ENCODE measurements at regions of chr2 and their contacts with region 1.

Region 1: GRCh38 chr2:177489719-177490301 is 97.2 kb downstream of the AGPS start:
- DNase-seq: peak in 1 of 2 donors; percentile 75
- H3K4me3 ChIP-seq: no peak overlapping the region
- H3K27ac ChIP-seq: no peak overlapping the region
- H3K4me1 ChIP-seq: no peaks in the 10 kb centered on the region
- H3K27me3 ChIP-seq: no peaks in the 10 kb centered on the region
- CTCF ChIP-seq: peak in 4 of 7 experiments; percentile 21 to 51 (median 46)
- EP300 ChIP-seq: no peak
- POLR2A ChIP-seq: no peak

Region 2: DNA sequence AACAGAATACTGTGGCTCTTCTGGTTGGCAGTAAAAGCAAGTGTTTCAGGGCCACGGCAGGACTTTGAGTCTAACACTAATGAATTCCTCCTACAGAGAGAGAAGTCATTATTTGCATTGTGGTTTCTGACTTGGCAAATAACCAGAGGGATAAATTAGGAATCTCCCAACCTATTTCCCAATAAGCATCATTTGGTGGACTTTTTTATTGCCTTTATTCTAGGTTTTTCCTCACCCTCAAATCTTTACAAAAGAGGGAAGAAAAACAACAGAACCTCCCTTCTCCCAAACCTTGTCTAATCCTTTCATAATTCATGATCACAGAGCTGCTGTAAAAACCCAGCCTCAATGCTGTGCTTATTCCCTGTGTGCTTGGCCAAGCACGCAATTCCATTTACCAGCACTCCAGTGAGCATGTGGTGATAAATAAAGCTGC is 82.4 kb after region 1 on chr2:
- intact Hi-C with region 1: no loop called
- DNase-seq: peak in 1 of 2 donors; percentile 32
- H3K4me3 ChIP-seq: no peak overlapping the region
- H3K27ac ChIP-seq: no peak overlapping the region
- H3K4me1 ChIP-seq: peaks cover 0 to 13% (median 6%) of the 10 kb centered on the region in 4 donors
- H3K27me3 ChIP-seq: no peaks in the 10 kb centered on the region
- CTCF ChIP-seq: no peak
- EP300 ChIP-seq: no peak
- POLR2A ChIP-seq: no peak

Region 3: DNA sequence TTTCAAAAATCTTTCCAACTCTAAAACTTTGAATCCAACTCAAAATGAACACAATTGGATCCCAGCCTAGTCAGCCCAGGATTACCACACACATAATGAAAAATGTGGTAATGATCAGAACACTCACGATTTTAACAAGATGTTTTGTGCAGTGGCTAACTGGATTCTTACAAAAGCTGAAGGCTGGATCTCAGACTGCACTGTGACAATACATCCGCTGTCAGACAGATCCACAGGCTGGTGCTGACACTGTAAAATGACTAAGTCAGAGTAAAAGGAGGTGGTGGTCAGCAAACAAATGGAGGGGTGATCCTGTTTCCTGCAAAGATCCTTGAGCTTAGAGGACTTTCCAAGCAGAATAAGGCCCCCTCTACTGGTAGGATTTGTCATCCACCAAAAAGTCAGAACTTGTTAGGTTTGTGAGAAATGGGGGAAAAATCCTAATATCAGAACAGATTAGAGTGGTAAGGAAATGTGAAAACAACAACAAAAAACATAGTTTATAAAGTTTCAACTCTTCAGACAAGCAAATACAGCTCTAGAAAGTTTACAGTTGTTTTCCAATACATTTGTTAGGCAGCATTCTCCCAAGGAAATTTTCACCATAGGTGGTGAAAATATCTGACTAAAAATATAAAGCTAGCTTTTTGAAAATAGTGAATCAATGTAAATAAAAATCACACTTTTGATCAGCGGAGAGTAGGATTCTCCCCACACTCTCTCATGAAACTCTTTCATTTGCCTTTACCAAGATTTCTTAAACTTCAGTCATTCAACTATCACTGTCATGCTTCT is 114.7 kb after region 1 on chr2:
- intact Hi-C with region 1: loop called (anchors 10 kb)
- DNase-seq: peak in 1 of 2 donors; percentile 84
- H3K4me3 ChIP-seq: no peak overlapping the region
- H3K27ac ChIP-seq: peak overlapping the region in 1 of 5 donors; percentile 5
- H3K4me1 ChIP-seq: peaks cover 0 to 7% (median 0%) of the 10 kb centered on the region in 4 donors
- H3K27me3 ChIP-seq: no peaks in the 10 kb centered on the region
- CTCF ChIP-seq: peak in 5 of 7 experiments; percentile 32 to 51 (median 49)
- EP300 ChIP-seq: no peak
- POLR2A ChIP-seq: no peak

Region 4: DNA sequence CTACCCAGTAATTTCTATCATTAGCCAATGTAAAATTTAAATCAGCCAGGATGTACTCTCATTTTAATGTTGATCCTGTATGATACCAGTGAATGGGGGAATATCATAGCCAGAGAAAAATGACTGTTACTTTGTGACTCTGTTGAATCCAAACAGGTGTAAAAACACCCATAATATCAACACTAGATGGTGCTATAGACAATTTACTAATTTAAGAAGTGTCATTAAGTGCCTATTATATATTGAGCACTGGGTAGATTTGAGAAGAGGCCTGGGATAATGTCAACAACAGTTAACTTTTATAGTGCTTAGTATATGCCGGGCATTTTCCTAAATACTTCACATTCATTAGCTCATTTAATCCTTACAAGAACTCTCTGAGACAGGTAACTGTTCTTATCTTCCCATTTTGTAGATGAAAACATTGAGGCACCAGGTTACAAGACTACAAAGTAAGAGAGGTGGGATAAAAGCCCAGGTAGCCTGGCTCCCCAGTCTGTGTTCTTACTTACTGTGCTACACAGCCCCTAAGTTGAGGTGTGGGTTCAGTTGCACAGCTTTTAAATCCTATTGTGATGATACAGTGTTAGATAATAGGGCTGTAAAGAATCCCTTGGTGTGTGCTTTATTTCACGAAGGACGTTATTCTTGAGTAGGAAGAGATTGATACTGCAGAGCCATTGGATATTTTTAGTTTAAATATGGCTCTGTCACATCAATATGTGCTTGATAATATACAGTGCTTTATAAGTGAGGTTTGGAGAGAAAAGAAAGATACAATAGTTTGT is 228.2 kb after region 1 on chr2:
- intact Hi-C with region 1: loop called (anchors 10 kb)
- DNase-seq: no peak
- H3K4me3 ChIP-seq: no peak overlapping the region
- H3K27ac ChIP-seq: no peak overlapping the region
- H3K4me1 ChIP-seq: no peaks in the 10 kb centered on the region
- H3K27me3 ChIP-seq: no peaks in the 10 kb centered on the region
- CTCF ChIP-seq: no peak
- EP300 ChIP-seq: no peak
- POLR2A ChIP-seq: no peak